ENCODE measurements at regions of chr3 and their contacts with region 1.

Region 1: DNA sequence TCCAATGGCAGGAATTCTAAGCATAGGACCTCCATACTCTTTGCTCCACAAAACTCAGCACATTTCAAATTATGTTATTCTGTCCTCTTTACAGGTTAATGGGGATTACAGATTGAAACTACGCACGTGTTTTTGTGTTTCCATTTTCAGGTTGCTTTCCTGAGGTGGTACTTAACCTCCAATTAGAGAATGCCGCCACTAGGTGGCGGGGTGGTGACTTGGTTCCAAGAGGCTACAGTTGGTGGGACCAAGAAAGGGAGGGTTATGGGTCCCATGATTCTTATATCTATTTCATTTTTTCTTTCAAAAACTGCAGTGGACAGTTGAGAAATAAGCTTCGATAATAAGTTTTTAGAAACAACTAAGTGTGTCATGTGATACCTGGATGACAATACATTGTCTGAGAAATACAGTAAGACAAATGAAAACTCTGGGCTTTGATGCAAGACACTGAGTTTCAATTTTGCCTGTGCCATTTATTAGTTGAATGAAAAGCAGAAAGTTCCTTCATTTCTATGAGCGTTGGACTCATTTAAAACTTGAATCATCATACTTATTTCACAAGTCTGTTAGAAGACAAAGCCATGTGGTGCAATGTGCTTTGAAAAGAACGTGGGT is 539.0 kb downstream of the FGF12 start:
- H3K4me3 ChIP-seq: no peak overlapping the region
- H3K27ac ChIP-seq: no peak overlapping the region
- H3K4me1 ChIP-seq: no peaks in the 10 kb centered on the region
- CTCF ChIP-seq: no peak

Region 2: DNA sequence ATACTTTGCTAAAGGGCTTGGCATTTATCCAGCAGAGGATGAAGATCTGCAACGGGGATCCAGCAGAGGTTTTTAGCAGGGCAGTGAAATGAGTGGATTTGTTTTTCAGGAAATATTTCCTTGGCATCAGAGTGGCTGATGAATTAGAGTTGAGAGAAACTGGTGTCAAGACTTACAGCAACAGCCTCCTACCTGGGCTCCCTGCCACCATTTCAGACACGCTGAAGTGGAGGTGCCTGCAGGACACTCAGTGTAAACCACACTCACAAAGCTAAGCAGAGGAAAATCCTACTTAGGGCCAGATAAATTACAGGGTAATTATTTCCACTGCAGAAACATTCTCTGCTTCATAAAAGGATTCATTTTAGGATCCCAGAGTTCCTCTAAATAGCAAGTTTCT is 19.3 kb after region 1 on chr3:
- CTCF ChIA-PET with region 1: interaction called, 16 read pairs
- POLR2A ChIA-PET with region 1: no interaction called
- H3K4me3 ChIP-seq: no peak overlapping the region
- H3K27ac ChIP-seq: no peak overlapping the region
- H3K4me1 ChIP-seq: peaks cover 4% of the 10 kb centered on the region; the same call in 1 of the 2 replicates
- CTCF ChIP-seq: no peak

Region 3: DNA sequence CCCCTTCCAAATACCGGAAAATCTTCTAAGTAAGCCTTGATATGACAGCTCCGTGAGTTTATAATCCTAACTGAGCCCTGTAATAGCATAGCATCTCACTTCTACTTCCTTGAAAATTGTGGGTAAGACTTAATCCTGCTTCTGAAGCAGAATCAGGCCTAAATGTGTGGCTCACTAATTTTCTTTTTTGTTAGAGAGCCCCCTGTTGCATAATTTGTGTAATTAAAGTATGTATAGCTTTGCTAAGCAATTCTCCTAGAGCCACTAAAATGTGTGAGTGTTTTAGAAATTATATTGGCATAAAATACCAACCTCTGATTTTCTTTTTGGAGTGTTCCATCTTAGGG is 234.6 kb after region 1 on chr3:
- CTCF ChIA-PET with region 1: interaction called, 12 read pairs
- POLR2A ChIA-PET with region 1: no interaction called
- H3K4me3 ChIP-seq: no peak overlapping the region
- H3K27ac ChIP-seq: no peak overlapping the region
- H3K4me1 ChIP-seq: no peaks in the 10 kb centered on the region
- CTCF ChIP-seq: no peak

Region 4: DNA sequence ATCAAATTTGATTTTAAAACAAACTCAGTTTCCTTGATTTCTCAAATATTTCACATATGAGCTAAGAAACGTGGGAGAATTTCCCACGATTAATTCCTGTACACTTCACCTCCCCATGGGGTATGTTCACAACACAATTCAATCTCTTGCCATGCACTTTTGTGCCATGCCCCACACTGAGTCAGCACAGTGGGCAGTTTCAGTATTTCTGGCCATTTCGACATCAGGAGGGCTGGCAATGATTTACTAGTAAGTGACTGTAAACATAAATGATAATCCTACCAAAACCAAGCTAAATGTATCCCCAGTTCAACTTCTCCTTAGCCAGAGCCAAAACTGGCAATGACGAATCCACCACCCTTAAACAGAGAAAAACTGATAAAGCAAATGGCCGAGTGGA is 245.4 kb after region 1 on chr3:
- CTCF ChIA-PET with region 1: interaction called, 10 read pairs
- POLR2A ChIA-PET with region 1: no interaction called
- H3K4me3 ChIP-seq: no peak overlapping the region
- H3K27ac ChIP-seq: no peak overlapping the region
- H3K4me1 ChIP-seq: no peaks in the 10 kb centered on the region
- CTCF ChIP-seq: no peak

Region 5: GRCh38 chr3:192444096-192444790 is 255.9 kb after region 1 on chr3:
- CTCF ChIA-PET with region 1: interaction called, 42 read pairs
- POLR2A ChIA-PET with region 1: no interaction called
- H3K4me3 ChIP-seq: no peak overlapping the region
- H3K27ac ChIP-seq: no peak overlapping the region
- H3K4me1 ChIP-seq: no peaks in the 10 kb centered on the region
- CTCF ChIP-seq: peak; percentile 55; the same call in 1 of the 2 replicates

Measured in HEK293 (cell line).